ENCODE measurements at regions of chr1 and their contacts with region 1.

Region 1: GRCh38 chr1:91511386-91511785 is 10.7 kb downstream of the CDC7 start:
- DNase-seq: no peak
- H3K4me3 ChIP-seq: no peak overlapping the region
- H3K27ac ChIP-seq: no peak overlapping the region
- H3K4me1 ChIP-seq: peaks cover 0 to 26% (median 22%) of the 10 kb centered on the region in 4 donors
- H3K27me3 ChIP-seq: no peaks in the 10 kb centered on the region
- CTCF ChIP-seq: peak; percentile 70 to 76 (median 71)
- EP300 ChIP-seq: no peak
- POLR2A ChIP-seq: no peak

Region 2: DNA sequence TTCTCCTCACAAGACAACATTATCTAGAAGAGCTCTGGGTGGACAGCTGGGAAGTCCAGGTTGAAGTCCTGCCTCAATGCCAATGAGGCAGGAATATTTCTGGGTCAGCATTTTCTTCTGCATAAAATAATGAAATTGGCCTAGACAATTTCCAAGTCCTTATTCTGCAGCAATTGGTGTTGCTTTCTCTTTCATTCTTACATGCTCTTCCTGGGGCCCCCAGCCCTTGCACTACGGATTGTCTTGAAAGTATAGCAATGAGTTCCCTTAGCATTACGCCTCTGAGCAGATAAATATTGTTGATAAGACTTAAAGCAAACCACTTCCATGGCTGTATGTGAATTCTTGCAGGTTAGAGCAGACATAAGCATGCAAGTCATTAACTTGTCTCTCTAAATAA is 186.0 kb after region 1 on chr1:
- intact Hi-C with region 1: loop called (anchors 10 kb)
- DNase-seq: no peak
- H3K4me3 ChIP-seq: no peak overlapping the region
- H3K27ac ChIP-seq: peak overlapping the region; percentile 38 to 62 (median 56)
- H3K4me1 ChIP-seq: peaks cover 48 to 72% (median 56%) of the 10 kb centered on the region in 4 donors
- H3K27me3 ChIP-seq: no peaks in the 10 kb centered on the region
- CTCF ChIP-seq: no peak
- EP300 ChIP-seq: no peak
- POLR2A ChIP-seq: no peak

Region 3: DNA sequence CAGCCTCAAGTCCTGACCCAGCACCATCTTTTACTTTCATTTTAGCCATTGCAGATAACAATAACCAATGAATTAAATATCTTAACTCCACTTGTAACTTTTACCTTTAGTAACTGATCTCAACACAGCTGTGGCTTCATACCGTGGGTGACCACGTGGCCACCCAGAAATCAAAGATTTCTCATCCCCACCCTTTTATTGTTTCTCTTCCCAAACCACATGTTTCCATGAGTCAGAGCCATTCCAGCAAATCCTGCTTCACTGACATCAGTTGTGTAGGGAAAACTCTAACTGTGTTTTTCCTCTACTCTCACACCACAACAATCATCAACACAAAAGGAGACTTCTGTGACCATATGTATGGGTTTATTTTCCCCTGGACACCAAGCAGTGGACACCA is 412.8 kb after region 1 on chr1:
- intact Hi-C with region 1: loop called (anchors 2 kb)
- DNase-seq: no peak
- H3K4me3 ChIP-seq: no peak overlapping the region
- H3K27ac ChIP-seq: no peak overlapping the region
- H3K4me1 ChIP-seq: peaks cover 0 to 10% (median 3%) of the 10 kb centered on the region in 4 donors
- H3K27me3 ChIP-seq: no peaks in the 10 kb centered on the region
- CTCF ChIP-seq: no peak
- EP300 ChIP-seq: no peak
- POLR2A ChIP-seq: no peak

Measured in esophagus muscularis mucosa (tissue), 4 donors.